Activated B cell treated with CpG ODN at 0.5 μM for 24 hours (primary cell): ENCODE measurements at regions of chr7 and their contacts with region 1.

Region 1: DNA sequence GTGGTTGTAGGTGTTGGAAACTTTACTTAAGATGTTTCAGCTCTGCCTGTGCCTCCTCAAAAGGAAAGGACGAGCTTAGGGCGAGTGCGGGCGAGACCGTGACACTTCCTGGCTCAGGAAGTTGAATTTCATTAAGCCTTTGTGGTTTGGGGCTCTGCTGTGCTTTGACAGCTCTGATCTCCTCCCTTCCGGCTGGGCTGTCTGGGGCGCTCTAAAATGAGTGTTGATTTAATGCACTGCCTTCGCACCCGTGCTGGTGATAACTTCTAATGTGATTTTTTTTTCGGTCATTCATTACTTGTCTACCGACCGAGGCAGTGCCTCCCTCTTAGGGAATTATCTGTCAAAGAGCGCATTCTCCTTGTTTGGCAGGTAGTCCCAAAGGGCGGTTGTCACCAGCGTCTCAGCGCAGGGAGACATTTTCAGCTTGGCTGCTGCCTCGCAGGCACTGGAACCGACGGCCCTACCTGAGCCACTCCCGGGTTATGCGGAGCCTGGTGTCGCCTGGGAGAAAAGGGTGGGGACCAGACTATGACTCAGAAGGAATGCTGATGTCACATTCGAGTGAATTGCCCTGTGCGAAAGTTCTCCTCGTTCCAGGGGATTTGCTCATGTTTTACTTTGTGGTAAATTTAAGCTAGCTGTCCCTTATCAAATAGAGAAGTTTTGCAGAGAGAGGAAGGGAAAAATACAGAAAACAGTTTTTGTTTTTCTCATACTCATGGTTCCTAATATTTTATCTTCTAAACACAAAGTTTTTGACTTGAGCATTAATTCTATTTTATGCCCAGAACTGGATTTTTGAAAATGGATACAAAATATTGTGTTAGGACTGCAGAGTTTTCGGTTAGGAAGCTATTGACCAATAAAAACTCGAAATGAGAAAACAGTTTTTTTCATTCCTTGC is 920 bp downstream of the TES start:
- DNase-seq: peak; percentile 52
- ATAC-seq: peak; percentile 71
- H3K4me3 Mint-ChIP-seq: peak overlapping the region; percentile 98
- H3K27ac Mint-ChIP-seq: peak overlapping the region; percentile 96
- H3K4me1 Mint-ChIP-seq: peaks cover 52% of the 10 kb centered on the region
- H3K27me3 Mint-ChIP-seq: no peaks in the 10 kb centered on the region
- CTCF ChIP-seq: no peak

Region 2: GRCh38 chr7:114922016-114922651 is 1289.1 kb before region 1 on chr7 and contains the start of gene MDFIC:
- CTCF ChIA-PET with region 1: no interaction called
- POLR2A ChIA-PET with region 1: no interaction called
- intact Hi-C with region 1: loop called (anchors 5 kb)
- DNase-seq: peak; percentile 66
- ATAC-seq: peak; percentile 63
- H3K4me3 Mint-ChIP-seq: peak within 1 kb of the TSS; percentile 95
- H3K27ac Mint-ChIP-seq: peak within 1 kb of the TSS; percentile 97
- H3K4me1 Mint-ChIP-seq: peaks cover 70% of the 10 kb centered on the region
- H3K27me3 Mint-ChIP-seq: no peaks in the 10 kb centered on the region
- CTCF ChIP-seq: no peak
- total RNA-seq, gene MDFIC: 139 and 160 TPM in 2 replicates

Region 3: GRCh38 chr7:116180302-116180701 is 31.0 kb before region 1 on chr7:
- CTCF ChIA-PET with region 1: interaction called, 13 read pairs
- POLR2A ChIA-PET with region 1: interaction called, 3 read pairs
- intact Hi-C with region 1: loop called (anchors 2 kb)
- DNase-seq: no peak
- ATAC-seq: peak; percentile 81
- H3K4me3 Mint-ChIP-seq: no peak overlapping the region
- H3K27ac Mint-ChIP-seq: no peak overlapping the region
- H3K4me1 Mint-ChIP-seq: no peaks in the 10 kb centered on the region
- H3K27me3 Mint-ChIP-seq: peaks cover 2% of the 10 kb centered on the region
- CTCF ChIP-seq: no peak

Region 4: GRCh38 chr7:116200963-116201362 is 10.3 kb before region 1 on chr7:
- CTCF ChIA-PET with region 1: no interaction called
- POLR2A ChIA-PET with region 1: interaction called, 10 read pairs
- intact Hi-C with region 1: loop called (anchors 1 kb)
- DNase-seq: no peak
- ATAC-seq: no peak
- H3K4me3 Mint-ChIP-seq: no peak overlapping the region
- H3K27ac Mint-ChIP-seq: no peak overlapping the region
- H3K4me1 Mint-ChIP-seq: no peaks in the 10 kb centered on the region
- H3K27me3 Mint-ChIP-seq: no peaks in the 10 kb centered on the region
- CTCF ChIP-seq: no peak

Region 5: GRCh38 chr7:116236020-116236630 is 24.9 kb after region 1 on chr7:
- CTCF ChIA-PET with region 1: interaction called, 9 read pairs
- POLR2A ChIA-PET with region 1: interaction called, 15 read pairs
- intact Hi-C with region 1: no loop called
- DNase-seq: no peak
- ATAC-seq: peak; percentile 77
- H3K4me3 Mint-ChIP-seq: no peak overlapping the region
- H3K27ac Mint-ChIP-seq: no peak overlapping the region
- H3K4me1 Mint-ChIP-seq: peaks cover 27% of the 10 kb centered on the region
- H3K27me3 Mint-ChIP-seq: no peaks in the 10 kb centered on the region
- CTCF ChIP-seq: no peak